Pancreas (tissue), 10 donors: ENCODE measurements at regions of chr1 and their contacts with region 1.

Region 1: GRCh38 chr1:165928075-165928731 is 100.8 kb downstream of the UCK2 start:
- DNase-seq: peak in 1 of 6 donors; percentile 35
- ATAC-seq: peak in 3 of 4 donors; percentile 59 to 66 (median 61)
- H3K4me3 ChIP-seq: no peak overlapping the region
- H3K27ac ChIP-seq: no peak overlapping the region
- H3K4me1 ChIP-seq: no peaks in the 10 kb centered on the region
- H3K27me3 ChIP-seq: no peaks in the 10 kb centered on the region
- CTCF ChIP-seq: peak in 3 of 4 donors; percentile 28 to 47 (median 35)

Region 2: GRCh38 chr1:166017395-166017794 is 89.2 kb after region 1 on chr1:
- intact Hi-C with region 1: no loop called
- DNase-seq: no peak
- ATAC-seq: no peak
- H3K4me3 ChIP-seq: no peak overlapping the region
- H3K27ac ChIP-seq: no peak overlapping the region
- H3K4me1 ChIP-seq: no peaks in the 10 kb centered on the region
- H3K27me3 ChIP-seq: no peaks in the 10 kb centered on the region
- CTCF ChIP-seq: no peak

Region 3: GRCh38 chr1:166479052-166479631 is 550.9 kb after region 1 on chr1:
- intact Hi-C with region 1: loop called in 1 of 3 experiments (anchors 10 kb)
- DNase-seq: peak in 5 of 6 donors; percentile 16 to 68 (median 48)
- ATAC-seq: peak in 3 of 4 donors; percentile 49 to 76 (median 60)
- H3K4me3 ChIP-seq: no peak overlapping the region
- H3K27ac ChIP-seq: no peak overlapping the region
- H3K4me1 ChIP-seq: no peaks in the 10 kb centered on the region
- H3K27me3 ChIP-seq: peaks cover 0 to 4% (median 0%) of the 10 kb centered on the region in 4 donors
- CTCF ChIP-seq: peak; percentile 57 to 72 (median 70)